ENCODE measurements at regions of chr4 and their contacts with region 1.

Region 1: DNA sequence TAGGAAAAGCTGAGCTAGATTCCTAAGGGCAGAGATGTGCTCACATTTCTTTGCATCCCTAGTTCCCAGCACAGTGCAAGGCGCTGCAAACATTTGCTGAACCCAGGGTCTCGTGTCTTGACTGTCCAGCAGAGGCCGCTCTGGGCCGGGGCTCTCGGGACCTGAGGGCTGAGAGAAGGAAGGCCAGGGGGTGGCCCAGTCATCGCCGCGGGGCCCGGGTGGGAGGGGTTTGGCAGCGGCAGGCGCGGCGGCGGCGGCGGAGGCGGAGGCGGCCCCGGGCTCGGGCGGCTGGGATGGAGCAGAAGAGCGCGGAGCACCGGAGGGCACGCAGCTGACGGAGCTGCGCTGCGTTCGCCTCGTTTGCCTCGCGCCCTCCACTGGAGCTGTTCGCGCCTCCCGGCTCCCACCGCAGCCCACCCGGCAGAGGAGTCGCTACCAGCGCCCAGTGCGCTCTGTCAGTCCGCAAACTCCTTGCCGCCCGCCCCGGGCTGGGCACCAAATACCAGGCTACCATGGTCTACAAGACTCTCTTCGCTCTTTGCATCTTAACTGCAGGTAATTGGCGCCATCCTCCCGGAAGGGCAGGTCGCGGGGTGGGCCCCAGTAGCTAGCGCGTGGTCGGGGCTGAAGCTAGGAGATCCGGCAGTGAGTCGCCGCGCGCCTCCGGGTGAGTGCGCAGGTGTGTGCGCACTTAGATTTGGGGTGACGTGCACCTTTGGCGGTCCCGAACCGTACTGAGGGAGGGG is at the start of gene PARM1:
- DNase-seq: peak; percentile 96
- H3K4me3 ChIP-seq: peak within 1 kb of the TSS; percentile 65 to 83 (median 72)
- H3K27ac ChIP-seq: peak within 1 kb of the TSS; percentile 67 to 85 (median 83)
- H3K4me1 ChIP-seq: peaks cover 3 to 34% (median 27%) of the 10 kb centered on the region in 4 donors
- H3K27me3 ChIP-seq: peaks cover 0 to 8% (median 0%) of the 10 kb centered on the region in 4 donors
- CTCF ChIP-seq: peak; percentile 71 to 81 (median 81)
- EP300 ChIP-seq: no peak
- POLR2A ChIP-seq: no peak
- total RNA-seq, gene PARM1: 12.9 to 25.7 (median 24.1) TPM

Region 2: GRCh38 chr4:75025431-75025830 is 92.4 kb after region 1 on chr4:
- intact Hi-C with region 1: no loop called
- DNase-seq: no peak
- H3K4me3 ChIP-seq: no peak overlapping the region
- H3K27ac ChIP-seq: no peak overlapping the region
- H3K4me1 ChIP-seq: no peaks in the 10 kb centered on the region
- H3K27me3 ChIP-seq: no peaks in the 10 kb centered on the region
- CTCF ChIP-seq: no peak
- EP300 ChIP-seq: no peak
- POLR2A ChIP-seq: no peak

Region 3: GRCh38 chr4:75490155-75490554 is 557.2 kb after region 1 on chr4:
- intact Hi-C with region 1: loop called (anchors 5 kb)
- DNase-seq: no peak
- H3K4me3 ChIP-seq: no peak overlapping the region
- H3K27ac ChIP-seq: no peak overlapping the region
- H3K4me1 ChIP-seq: peaks cover 0 to 12% (median 10%) of the 10 kb centered on the region in 4 donors
- H3K27me3 ChIP-seq: no peaks in the 10 kb centered on the region
- CTCF ChIP-seq: peak; percentile 28 to 42 (median 40)
- EP300 ChIP-seq: no peak
- POLR2A ChIP-seq: no peak

Measured in esophagus muscularis mucosa (tissue), 4 donors.